ENCODE measurements at regions of chr21 and their contacts with region 1.

Region 1: DNA sequence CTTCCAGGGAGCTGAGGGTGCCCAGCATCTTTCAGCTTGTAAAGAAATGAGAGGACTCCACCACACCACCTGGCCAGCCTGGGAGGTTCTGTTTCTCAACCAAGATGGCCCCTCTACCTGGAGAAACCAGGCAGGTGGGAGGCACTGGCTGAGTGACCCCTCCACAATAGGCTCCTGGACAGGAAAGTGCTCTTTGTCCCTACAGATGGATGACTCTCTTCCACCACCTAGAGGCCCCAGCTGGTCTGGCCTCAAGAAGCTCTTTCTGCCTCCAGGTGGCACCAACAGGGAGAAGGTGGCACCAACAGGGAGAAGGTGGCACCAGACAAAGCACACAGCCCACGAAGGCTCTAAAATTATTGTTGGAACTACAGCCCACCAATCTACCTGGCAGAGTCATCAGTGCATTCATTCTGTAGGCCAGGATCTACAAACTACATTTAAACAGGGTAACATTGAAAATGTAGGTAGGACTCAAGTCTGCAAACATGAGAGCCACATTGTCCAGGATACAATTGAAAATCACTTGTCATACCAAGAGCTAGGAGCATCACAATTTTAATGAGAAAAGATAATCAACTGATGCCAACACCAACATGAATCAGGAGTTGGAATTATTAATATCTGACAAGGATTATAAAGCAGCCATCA is 14.4 kb downstream of the TMPRSS3 start:
- DNase-seq: peak; percentile 85
- H3K4me3 ChIP-seq: no peak overlapping the region
- H3K27ac ChIP-seq: no peak overlapping the region
- H3K4me1 ChIP-seq: no peaks in the 10 kb centered on the region
- H3K27me3 ChIP-seq: no peaks in the 10 kb centered on the region
- CTCF ChIP-seq: peak; percentile 84

Region 2: DNA sequence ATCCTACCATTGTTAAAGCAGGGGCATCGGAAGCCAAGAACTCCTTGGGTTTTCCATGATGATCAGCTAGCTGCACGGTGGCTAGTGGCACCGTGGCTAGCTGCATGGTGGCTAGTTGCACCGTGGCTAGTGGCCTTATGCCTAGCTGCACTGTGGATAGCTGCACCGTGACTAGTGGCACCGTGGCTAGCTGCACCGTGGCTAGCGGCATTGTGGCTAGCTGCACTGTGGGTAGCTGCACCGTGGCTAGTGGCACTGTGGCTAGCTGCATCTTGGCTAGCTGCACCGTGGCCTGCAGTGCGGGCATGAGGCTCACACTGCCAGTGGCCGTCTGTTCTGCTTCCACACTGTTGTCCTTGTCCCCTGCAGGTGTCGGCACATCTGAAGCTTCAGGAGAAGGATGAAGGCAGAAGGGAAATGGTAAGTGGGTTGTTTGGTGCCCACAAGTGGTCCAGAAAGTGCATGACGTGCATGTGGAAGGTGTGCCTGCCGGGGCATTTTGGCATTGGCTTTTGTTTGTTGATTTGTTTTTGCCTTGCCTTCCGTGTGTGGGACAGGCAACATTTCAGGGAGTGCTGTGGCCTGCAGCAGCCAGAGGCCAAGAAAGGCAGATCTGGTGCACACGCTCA is 104.8 kb before region 1 on chr21:
- intact Hi-C with region 1: no loop called
- DNase-seq: no peak
- H3K4me3 ChIP-seq: no peak overlapping the region
- H3K27ac ChIP-seq: no peak overlapping the region
- H3K4me1 ChIP-seq: no peaks in the 10 kb centered on the region
- H3K27me3 ChIP-seq: no peaks in the 10 kb centered on the region
- CTCF ChIP-seq: no peak

Region 3: GRCh38 chr21:42309753-42310221 is 71.7 kb before region 1 on chr21:
- intact Hi-C with region 1: loop called (anchors 2 kb)
- DNase-seq: peak; percentile 85
- H3K4me3 ChIP-seq: no peak overlapping the region
- H3K27ac ChIP-seq: peak overlapping the region; percentile 23
- H3K4me1 ChIP-seq: no peaks in the 10 kb centered on the region
- H3K27me3 ChIP-seq: peaks cover 7% of the 10 kb centered on the region
- CTCF ChIP-seq: peak; percentile 69

Region 4: GRCh38 chr21:43012595-43012994 is 631.1 kb after region 1 on chr21:
- intact Hi-C with region 1: no loop called
- DNase-seq: no peak
- H3K4me3 ChIP-seq: no peak overlapping the region
- H3K27ac ChIP-seq: no peak overlapping the region
- H3K4me1 ChIP-seq: no peaks in the 10 kb centered on the region
- H3K27me3 ChIP-seq: no peaks in the 10 kb centered on the region
- CTCF ChIP-seq: no peak

Measured in colonic mucosa (tissue), 4 donors.